Gastrocnemius medialis (tissue), 4 donors: ENCODE measurements at regions of chr10 and their contacts with region 1.

Region 1: GRCh38 chr10:86755740-86756510 is 494 bp upstream of the BMPR1A start:
- DNase-seq: peak; percentile 87 to 94
- ATAC-seq: peak; percentile 73 to 75
- H3K4me3 ChIP-seq: peak overlapping the region; percentile 75 to 92 (median 84)
- H3K27ac ChIP-seq: peak overlapping the region; percentile 95 to 99 (median 98)
- H3K4me1 ChIP-seq: peaks cover 43 to 59% of the 10 kb centered on the region in 2 donors
- H3K27me3 ChIP-seq: no peaks in the 10 kb centered on the region
- CTCF ChIP-seq: no peak
- POLR2A ChIP-seq: peak; percentile 88 to 92

Region 2: DNA sequence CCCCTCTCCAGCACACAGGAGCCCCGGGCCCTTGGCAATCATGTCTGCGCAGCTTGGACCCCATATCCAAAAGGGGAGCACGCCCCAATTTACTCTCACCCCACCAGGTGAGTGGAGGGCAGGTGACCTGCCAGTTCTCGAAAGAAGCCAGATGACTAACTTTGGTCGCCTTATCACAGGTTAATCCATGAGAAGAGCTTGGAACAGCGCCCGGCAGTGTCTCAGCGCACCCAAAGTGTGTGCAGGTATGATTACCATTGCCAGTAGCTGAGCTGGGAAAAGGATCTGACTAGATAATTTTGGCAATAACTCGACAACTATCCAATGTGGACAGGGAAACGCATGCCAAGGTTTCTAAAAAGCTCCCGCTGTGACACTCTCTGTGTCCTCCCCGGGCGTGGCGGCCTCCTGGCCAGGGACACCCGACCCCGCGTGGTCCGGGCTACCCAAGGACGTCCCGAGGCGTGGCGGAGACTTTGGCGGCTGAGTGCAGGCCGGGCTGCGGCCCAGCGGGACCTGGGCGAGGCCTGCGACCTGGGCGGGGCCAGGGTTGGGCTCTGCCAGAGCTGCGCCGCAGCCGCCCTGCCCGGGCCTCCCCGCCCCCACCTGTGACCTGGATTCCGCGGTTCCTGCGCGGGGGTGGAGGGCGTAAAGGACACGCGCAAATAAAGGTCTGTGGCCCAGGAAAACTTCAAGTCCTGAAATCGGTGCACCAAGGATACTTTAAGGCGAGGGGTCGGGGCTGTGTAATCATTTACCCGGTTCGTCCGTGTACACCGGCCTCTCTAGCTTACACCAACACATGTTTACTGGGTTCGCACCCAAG is 220.7 kb before region 1 on chr10:
- in situ Hi-C with region 1: no loop called
- intact Hi-C with region 1: loop called (anchors 5 kb)
- DNase-seq: peak; percentile 83 to 96
- ATAC-seq: peak; percentile 72 to 73
- H3K4me3 ChIP-seq: peak overlapping the region; percentile 53 to 66 (median 58)
- H3K27ac ChIP-seq: peak overlapping the region; percentile 91 to 93 (median 92)
- H3K4me1 ChIP-seq: peaks cover 21% of the 10 kb centered on the region in 2 donors
- H3K27me3 ChIP-seq: no peaks in the 10 kb centered on the region
- CTCF ChIP-seq: no peak
- POLR2A ChIP-seq: peak; percentile 33 to 38

Region 3: DNA sequence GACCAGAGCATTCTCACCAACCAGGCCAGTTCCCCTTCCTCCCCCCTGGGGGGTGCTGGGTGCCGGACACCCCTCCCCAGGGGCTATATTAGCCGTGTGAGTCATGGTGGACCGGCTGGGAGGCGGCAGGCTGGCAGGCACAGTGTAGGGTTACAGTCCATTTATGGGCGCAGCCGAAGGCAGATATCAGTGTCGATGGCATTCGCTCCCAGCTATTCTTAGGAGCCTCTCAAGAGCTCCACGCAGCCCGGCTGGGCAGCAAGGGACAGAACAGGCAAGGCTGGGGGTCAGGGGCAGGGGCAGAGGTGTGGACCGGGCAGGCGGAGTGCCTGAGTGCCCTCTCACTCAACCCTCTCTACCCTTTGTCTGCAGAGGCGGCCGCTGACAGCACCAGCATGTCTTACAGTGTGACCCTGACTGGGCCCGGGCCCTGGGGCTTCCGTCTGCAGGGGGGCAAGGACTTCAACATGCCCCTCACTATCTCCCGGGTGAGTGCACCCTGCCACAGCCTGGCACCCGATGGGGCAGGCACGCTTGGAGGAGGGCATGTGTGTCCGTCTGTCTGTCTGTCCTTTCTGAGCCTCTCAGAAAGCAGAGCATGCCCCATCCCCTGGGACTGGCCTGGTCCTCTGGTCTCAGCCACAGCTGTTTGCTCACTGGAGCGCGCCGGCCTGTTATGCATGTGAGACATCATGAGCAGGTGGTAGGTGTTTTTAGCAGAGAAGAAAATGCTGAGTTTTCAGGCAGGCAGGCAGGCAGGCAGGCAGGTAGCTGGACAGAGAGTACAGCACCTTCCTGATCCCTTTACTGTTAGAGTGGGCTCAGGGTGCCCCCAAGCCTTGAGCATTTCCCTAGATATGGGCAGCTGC is 87.4 kb before region 1 on chr10 and contains the start of gene LDB3:
- in situ Hi-C with region 1: no loop called
- intact Hi-C with region 1: loop called (anchors 5 kb)
- DNase-seq: peak; percentile 91 to 97
- ATAC-seq: peak; percentile 48 to 56
- H3K4me3 ChIP-seq: peak within 1 kb of the TSS; percentile 51 to 79 (median 69)
- H3K27ac ChIP-seq: peak within 1 kb of the TSS; percentile 98 to 100 (median 99)
- H3K4me1 ChIP-seq: peaks cover 86 to 98% of the 10 kb centered on the region in 2 donors
- H3K27me3 ChIP-seq: no peaks in the 10 kb centered on the region
- CTCF ChIP-seq: no peak
- POLR2A ChIP-seq: peak; percentile 92 to 98
- total RNA-seq, gene LDB3: 164 to 305 (median 227) TPM

Region 4: GRCh38 chr10:86710987-86711512 is 44.9 kb before region 1 on chr10:
- in situ Hi-C with region 1: no loop called
- intact Hi-C with region 1: loop called (anchors 1 kb)
- DNase-seq: peak; percentile 76 to 90
- ATAC-seq: peak; percentile 69 to 77
- H3K4me3 ChIP-seq: peak overlapping the region; percentile 65 to 90 (median 78)
- H3K27ac ChIP-seq: peak overlapping the region; percentile 91 to 97 (median 96)
- H3K4me1 ChIP-seq: peaks cover 27 to 48% of the 10 kb centered on the region in 2 donors
- H3K27me3 ChIP-seq: no peaks in the 10 kb centered on the region
- CTCF ChIP-seq: peak; percentile 82 to 96 (median 94)
- POLR2A ChIP-seq: peak; percentile 78 to 85

Region 5: DNA sequence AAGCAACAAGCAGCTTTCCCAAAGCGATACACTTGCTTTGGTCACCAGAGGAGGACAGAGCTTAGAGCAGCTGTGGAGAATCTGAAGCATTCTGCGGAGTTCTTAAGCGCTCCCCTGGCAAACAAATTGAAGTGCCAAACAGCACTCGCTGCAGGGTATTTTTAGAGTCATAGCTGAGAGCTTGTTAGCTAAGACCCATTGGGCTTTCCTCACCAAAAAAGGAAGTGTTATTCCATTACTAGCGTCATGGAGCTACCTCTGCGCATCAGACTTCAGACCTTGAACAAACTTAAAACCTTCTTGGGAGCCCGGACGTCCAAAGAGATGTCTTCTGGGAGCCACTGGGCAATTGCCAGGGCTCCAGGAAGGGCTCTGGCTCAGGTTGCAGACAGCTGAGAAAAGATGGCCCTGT is 22.7 kb before region 1 on chr10:
- in situ Hi-C with region 1: no loop called
- intact Hi-C with region 1: loop called (anchors 2 kb)
- DNase-seq: peak in 1 of 2 donors; percentile 82
- ATAC-seq: peak; percentile 85 to 90
- H3K4me3 ChIP-seq: peak overlapping the region in 1 of 4 donors; percentile 19
- H3K27ac ChIP-seq: peak overlapping the region; percentile 69 to 86 (median 72)
- H3K4me1 ChIP-seq: peaks cover 35 to 45% of the 10 kb centered on the region in 2 donors
- H3K27me3 ChIP-seq: no peaks in the 10 kb centered on the region
- CTCF ChIP-seq: no peak
- POLR2A ChIP-seq: no peak

Region 6: DNA sequence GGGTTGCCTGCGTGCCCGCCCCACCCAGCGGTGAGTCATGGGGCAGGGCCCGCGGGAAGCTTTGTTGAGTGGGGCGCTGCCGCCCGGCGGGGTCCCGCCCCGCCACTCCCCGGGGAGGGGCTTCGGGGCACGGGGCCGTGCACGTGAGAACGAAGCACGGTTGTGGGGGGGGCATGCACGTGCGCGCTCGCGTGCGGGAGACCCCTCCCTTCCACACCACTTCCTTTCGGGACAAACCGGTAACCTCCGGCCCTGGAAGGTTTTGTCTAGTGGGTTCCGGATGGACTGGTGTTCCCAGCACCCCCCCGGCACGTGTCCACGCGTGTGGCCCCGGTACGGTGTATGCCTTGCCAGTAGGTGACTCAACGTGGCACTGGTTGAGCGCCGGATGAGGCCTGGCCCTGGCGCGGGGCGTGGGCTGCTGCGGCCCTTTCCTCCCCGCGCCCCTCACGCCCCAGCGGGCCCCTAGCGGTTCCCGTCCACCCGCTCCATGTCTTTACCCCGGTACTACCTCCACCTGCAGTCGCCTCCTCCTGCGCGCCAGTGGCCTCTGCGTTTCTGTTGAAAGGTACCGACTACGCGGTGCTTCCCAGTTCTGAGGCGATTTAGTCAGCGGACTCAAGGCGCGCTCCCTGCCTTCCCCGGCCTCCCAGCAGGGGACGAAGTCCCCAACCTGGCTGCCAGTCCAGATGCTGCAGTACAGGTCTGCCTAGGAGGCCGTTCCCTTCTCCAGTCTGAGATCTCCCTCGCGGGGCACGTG is 215.5 kb after region 1 on chr10:
- in situ Hi-C with region 1: no loop called
- intact Hi-C with region 1: loop called (anchors 5 kb)
- DNase-seq: peak; percentile 75 to 85
- ATAC-seq: peak; percentile 71 to 76
- H3K4me3 ChIP-seq: peak overlapping the region; percentile 62 to 87 (median 74)
- H3K27ac ChIP-seq: peak overlapping the region; percentile 90 to 98 (median 96)
- H3K4me1 ChIP-seq: peaks cover 27 to 37% of the 10 kb centered on the region in 2 donors
- H3K27me3 ChIP-seq: no peaks in the 10 kb centered on the region
- CTCF ChIP-seq: no peak
- POLR2A ChIP-seq: peak in 1 of 2 donors; percentile 26

Region 7: DNA sequence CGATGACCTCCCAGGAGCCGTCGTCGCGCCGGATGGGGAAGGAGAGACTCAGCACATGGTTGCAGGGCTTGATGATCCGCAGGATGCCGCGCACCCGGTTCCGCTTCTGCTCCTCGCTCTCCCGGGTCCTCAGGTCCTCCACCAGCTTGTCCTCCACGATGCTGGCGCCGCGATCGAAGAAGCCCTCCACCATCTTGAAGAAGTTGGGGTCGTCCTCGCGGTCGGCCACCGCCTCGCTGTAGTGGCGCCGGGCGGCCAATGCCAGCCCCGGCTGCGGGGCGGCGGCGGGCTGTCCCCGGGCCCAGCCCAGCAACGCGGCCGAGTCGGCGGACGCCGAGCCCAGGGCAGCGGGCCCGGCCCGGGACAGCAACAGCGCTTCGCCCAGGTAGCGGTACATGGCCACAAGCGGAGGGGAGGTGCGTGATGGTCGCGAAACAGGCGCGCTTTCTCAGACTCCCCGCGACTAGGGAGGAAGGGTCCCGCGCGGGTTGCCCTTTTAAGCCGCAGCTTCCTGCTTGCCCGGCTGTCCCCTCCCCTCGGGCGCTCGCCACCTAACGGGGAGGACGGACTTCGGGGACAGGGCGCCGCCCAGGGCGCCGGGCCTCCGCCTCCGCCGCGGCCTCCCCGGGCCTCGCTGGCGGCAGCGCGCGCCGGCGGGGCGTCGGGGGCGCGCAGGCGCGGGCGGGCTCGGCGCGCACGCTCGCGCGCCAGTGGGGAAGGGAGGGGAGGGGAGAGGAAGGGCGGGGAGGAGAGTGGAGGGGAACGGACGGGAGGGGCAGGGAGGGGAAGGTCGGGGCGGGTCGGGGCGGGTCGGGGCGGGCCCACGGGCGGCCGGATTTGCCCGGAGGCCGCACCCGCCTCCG is 338.7 kb after region 1 on chr10 and contains the starts of genes GLUD1 and SHLD2:
- in situ Hi-C with region 1: no loop called
- intact Hi-C with region 1: loop called (anchors 1 kb)
- DNase-seq: peak; percentile 88 to 89
- ATAC-seq: peak; percentile 83 to 87
- H3K4me3 ChIP-seq: peak within 1 kb of the TSS; percentile 82 to 94 (median 86)
- H3K27ac ChIP-seq: peak within 1 kb of the TSS; percentile 95 to 99 (median 97)
- H3K4me1 ChIP-seq: peaks cover 12 to 30% of the 10 kb centered on the region in 2 donors
- H3K27me3 ChIP-seq: no peaks in the 10 kb centered on the region
- CTCF ChIP-seq: peak in 1 of 5 experiments; percentile 19
- POLR2A ChIP-seq: peak; percentile 82 to 84
- total RNA-seq, gene GLUD1: 69.2 to 80.1 (median 77.2) TPM
- total RNA-seq, gene SHLD2: 7.2 to 15.2 (median 12.3) TPM